ENCODE measurements at regions of chr13 and their contacts with region 1.

Region 1: DNA sequence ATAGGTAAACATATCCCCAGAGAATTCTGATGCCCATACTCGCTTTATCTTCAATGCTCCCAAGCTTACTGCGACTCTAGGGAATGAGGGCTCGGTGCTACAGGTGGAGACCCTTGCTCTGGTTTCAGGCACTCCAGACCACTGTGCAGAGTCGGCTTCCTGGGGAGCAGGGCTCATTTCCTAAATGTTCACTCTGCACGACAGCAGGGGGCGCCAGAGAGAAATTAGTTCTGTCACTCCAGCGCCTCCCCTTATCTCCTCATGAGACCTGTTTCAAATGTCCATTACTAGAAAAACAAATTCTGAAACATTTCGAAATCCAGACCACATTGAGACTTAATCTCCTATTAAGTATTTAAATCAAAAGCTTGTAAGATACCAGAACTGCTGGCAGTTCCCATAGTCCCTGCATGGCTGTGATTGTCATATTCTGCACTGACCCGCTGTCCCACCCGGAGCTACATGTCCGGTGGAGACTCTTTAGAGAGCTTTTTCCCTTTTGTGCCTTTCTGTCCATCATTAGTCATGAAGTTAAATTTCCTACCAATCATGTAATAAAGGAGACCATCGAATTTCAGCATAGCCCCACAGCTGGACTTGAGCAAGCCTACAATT is 22.4 kb downstream of the EPSTI1 start:
- DNase-seq: peak; percentile 88
- ATAC-seq: peak; percentile 84
- H3K4me3 Mint-ChIP-seq: no peak overlapping the region
- H3K27ac Mint-ChIP-seq: no peak overlapping the region
- H3K4me1 Mint-ChIP-seq: peaks cover 13% of the 10 kb centered on the region
- H3K27me3 Mint-ChIP-seq: no peaks in the 10 kb centered on the region
- CTCF ChIP-seq: peak; percentile 90

Region 2: GRCh38 chr13:42981853-42982252 is 12.2 kb after region 1 on chr13:
- CTCF ChIA-PET with region 1: interaction called, 22 read pairs
- POLR2A ChIA-PET with region 1: interaction called, 3 read pairs
- intact Hi-C with region 1: no loop called
- DNase-seq: no peak
- ATAC-seq: no peak
- H3K4me3 Mint-ChIP-seq: no peak overlapping the region
- H3K27ac Mint-ChIP-seq: no peak overlapping the region
- H3K4me1 Mint-ChIP-seq: peaks cover 10% of the 10 kb centered on the region
- H3K27me3 Mint-ChIP-seq: no peaks in the 10 kb centered on the region
- CTCF ChIP-seq: no peak

Region 3: DNA sequence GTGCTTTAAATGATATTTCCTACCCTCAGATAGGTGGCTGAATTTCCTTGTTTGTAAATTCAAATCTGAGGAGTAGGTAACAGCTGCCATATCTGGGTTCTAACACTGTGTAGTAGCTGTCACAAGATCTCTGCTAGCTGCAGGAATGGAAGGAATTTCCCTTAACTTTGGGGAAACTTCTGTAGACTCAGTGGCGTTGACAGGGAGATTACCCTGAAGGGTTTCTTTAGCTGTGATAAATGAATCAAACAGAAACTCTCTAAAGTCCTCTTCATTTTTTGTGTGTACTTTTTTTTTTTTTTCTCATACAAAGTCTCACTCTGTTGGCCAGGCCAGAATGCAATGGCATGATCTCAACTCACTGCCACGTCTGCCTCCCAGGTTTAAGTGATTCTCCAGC is 27.7 kb after region 1 on chr13:
- CTCF ChIA-PET with region 1: interaction called, 14 read pairs
- POLR2A ChIA-PET with region 1: interaction called, 4 read pairs
- intact Hi-C with region 1: no loop called
- DNase-seq: no peak
- ATAC-seq: peak; percentile 49
- H3K4me3 Mint-ChIP-seq: no peak overlapping the region
- H3K27ac Mint-ChIP-seq: peak overlapping the region; percentile 38
- H3K4me1 Mint-ChIP-seq: peaks cover 35% of the 10 kb centered on the region
- H3K27me3 Mint-ChIP-seq: no peaks in the 10 kb centered on the region
- CTCF ChIP-seq: no peak

Region 4: GRCh38 chr13:43792076-43792881 is 822.6 kb after region 1 on chr13:
- CTCF ChIA-PET with region 1: no interaction called
- POLR2A ChIA-PET with region 1: no interaction called
- intact Hi-C with region 1: loop called (anchors 10 kb)
- DNase-seq: no peak
- ATAC-seq: no peak
- H3K4me3 Mint-ChIP-seq: no peak overlapping the region
- H3K27ac Mint-ChIP-seq: no peak overlapping the region
- H3K4me1 Mint-ChIP-seq: peaks cover 5% of the 10 kb centered on the region
- H3K27me3 Mint-ChIP-seq: peaks cover 41% of the 10 kb centered on the region
- CTCF ChIP-seq: no peak

Measured in activated CD8-positive, alpha-beta T cell treated with anti-CD3 and anti-CD28 coated beads for 36 hours (primary cell).